ENCODE measurements at regions of chr16 and their contacts with region 1.

Region 1: GRCh38 chr16:11356573-11357331 is 11.5 kb downstream of the RMI2 start:
- DNase-seq: peak; percentile 69
- CTCF ChIP-seq: peak; percentile 69

Region 2: DNA sequence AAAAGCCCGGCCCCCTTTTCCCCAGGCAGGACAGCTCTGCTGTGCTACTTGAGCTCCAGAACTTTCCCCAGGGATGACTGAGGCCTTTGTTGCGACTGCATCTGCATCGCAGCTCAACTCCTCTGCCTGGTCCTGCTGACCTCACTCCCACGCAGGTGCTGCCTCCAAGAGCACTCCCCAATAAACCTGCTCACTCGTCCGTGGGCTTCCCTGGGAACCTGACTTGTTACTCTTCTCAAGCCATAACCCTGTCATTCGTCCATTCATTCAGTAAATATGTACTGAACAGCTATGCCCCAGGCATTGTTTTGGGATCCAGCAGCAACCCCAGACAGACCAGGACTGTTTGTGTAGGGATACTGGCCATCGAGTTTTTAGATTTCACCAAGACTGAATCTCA is 23.0 kb before region 1 on chr16:
- CTCF ChIA-PET with region 1: interaction called, 13 read pairs
- POLR2A ChIA-PET with region 1: no interaction called
- DNase-seq: no peak
- CTCF ChIP-seq: no peak

Region 3: DNA sequence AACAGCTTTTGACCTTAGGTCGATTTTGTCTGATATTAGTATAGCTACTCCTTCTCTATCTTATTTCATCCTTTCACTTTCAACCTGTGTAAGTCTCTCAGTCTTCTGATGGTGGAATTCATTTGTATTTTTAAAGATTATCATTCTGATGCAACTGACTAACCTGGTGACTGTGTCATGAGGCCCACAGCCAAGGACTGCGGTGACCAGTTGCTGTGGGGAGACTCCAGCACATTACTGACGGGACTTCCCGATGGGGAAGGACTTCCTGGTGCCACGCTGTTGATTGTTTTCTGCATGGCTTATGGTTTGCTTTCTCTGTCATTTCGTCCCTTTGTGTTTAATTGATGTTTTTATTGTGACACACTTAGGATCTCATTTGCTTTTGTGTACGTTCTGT is 22.7 kb after region 1 on chr16:
- CTCF ChIA-PET with region 1: interaction called, 15 read pairs
- POLR2A ChIA-PET with region 1: no interaction called
- DNase-seq: peak; percentile 73
- CTCF ChIP-seq: no peak

Region 4: DNA sequence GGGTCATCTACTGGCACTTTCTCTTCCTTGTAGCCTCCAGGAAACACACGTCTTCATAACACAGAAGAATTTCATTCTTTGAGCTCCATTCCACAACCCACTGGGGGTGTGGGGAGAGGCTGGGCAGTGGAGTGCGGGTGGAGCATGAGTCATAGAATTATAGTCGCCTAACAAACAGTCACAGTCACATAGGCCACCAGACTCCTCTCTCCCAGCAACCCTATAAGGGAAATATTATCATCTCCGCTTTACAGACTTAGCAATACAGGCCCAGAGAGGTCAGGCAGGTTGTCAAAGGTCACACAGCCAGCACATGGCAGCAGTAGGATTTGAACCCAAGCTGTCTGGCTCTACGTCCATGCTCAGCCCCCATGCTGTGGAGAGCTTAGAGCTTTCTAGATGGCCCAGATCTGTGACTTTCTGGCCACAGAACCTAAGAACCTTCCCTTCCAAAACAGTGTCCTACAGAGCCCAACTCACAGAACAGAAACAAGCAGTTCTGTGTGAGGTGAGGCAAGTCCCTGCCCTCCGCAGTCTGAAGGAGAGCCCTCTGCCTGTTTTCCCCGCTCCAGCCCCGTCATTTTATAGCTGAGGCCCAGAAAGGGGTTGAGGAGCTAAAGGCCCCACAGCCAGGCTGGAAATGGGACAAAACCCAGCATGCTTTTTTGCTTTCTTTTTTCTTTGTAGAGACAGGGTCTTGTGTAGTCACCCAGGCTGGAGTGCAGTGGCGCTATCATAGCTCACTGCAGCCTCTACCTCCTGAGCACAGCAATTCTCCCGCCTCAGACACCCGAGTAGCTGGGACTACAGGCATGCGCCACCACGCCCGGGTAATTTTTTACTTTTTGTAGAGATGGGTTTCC is 240.7 kb after region 1 on chr16:
- CTCF ChIA-PET with region 1: no interaction called
- POLR2A ChIA-PET with region 1: no interaction called
- DNase-seq: no peak
- CTCF ChIP-seq: no peak